ENCODE measurements at regions of chr2 and their contacts with region 1.

Region 1: DNA sequence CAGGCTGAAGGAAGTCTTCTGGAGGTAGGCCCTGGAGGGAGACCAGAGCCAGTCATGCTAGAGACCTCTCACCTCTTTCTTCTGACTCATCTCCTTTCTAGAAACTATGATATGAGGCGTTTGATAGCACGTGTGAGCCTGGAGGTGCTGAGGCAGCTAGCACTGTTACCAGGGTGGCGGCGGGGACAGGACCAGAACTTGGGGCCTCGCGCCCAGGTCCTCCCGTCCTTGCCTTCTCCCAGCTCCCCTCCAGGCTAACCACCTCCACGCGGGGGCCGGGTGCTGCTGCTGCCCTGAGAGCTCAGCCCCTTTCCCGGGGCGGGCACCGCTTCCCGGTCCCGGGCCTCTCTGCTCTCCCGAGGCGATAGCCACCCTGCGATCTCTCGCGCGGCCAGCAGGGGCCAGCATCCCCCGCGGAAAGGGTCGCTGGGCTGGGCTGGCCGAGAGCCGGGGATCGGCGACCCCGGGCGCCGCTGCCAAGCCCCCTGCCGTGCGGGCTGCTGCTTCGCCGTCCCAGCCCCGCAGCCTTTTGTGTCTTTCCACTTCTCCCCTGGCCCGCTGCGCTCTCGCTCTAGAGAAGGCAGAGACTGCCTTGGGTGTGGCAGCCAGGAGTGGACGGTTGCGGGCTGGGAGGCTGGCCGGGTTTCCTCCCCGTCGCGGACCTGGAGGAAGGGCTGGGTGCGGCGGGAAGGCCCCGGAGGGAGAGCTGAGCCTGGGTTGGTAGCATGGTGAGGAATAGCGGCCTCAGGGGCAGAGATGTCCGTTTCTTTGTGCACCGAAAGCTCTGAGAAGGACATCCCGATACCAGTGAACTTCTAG is 49.1 kb downstream of the TMEM17 start:
- DNase-seq: peak; percentile 88

Region 2: DNA sequence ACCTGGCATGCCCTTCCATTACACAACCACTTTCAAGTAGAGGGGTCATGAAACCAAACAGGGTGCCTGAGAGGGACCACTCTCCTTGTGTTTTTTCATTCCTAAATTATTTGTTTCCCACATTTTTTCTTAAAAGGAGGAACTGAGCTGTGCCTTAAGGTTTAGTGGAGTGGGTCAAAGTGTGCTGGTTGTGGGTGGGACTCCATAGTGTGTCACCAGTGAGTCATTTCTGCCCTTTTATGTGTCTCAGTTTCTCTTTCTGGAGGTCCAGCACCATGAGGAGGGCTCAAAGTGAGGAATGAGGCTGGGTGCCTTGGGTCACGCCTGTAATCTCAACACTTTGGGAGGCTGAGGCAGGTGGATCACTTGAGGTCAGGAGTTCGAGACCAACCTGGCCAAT is 513.7 kb before region 1 on chr2:
- in situ Hi-C with region 1: no loop called
- DNase-seq: no peak

Region 3: GRCh38 chr2:62774555-62775366 is 317.8 kb after region 1 on chr2:
- in situ Hi-C with region 1: loop called (anchors 25 kb)
- DNase-seq: peak; percentile 48

Region 4: GRCh38 chr2:62966991-62967390 is 510.1 kb after region 1 on chr2:
- in situ Hi-C with region 1: no loop called
- DNase-seq: no peak